Activated CD4-positive, alpha-beta T cell treated with anti-CD3 and anti-CD28 coated beads for 36 hours (primary cell): ENCODE measurements at regions of chr14 and their contacts with region 1.

Region 1: DNA sequence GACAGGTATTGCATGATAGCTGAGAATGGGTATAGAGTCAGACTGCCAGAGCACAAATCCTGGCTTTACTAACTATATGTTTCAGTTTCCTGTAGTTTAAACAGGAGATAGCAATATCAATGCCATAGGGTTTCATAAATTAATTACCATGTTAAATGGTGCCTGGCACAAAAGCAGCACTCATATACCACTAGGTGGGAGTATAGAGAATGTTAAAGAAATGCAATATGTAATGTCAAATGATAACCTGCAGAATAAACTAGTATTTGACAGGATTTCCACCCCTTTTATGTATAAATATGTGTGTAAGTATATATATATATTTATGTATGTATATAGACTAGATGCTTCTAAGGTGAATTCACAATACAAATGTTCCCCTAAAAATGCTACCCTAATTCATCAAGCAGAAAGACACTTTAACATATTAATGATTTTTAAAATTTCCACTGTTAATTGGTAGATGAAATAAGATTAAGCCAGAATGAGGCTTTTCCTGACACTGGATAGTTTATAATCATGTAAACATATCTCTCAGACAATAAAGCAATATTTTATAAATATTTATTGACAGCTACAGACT is 8.6 kb downstream of the WDR89 start:
- DNase-seq: no peak
- ATAC-seq: peak; percentile 69
- H3K4me3 Mint-ChIP-seq: no peak overlapping the region
- H3K27ac Mint-ChIP-seq: no peak overlapping the region
- H3K4me1 Mint-ChIP-seq: peaks cover 37% of the 10 kb centered on the region
- H3K27me3 Mint-ChIP-seq: no peaks in the 10 kb centered on the region

Region 2: GRCh38 chr14:63134801-63135200 is 498.2 kb before region 1 on chr14:
- CTCF ChIA-PET with region 1: no interaction called
- POLR2A ChIA-PET with region 1: no interaction called
- intact Hi-C with region 1: no loop called
- DNase-seq: no peak
- ATAC-seq: no peak
- H3K4me3 Mint-ChIP-seq: no peak overlapping the region
- H3K27ac Mint-ChIP-seq: no peak overlapping the region
- H3K4me1 Mint-ChIP-seq: no peaks in the 10 kb centered on the region
- H3K27me3 Mint-ChIP-seq: peaks cover 3% of the 10 kb centered on the region

Region 3: DNA sequence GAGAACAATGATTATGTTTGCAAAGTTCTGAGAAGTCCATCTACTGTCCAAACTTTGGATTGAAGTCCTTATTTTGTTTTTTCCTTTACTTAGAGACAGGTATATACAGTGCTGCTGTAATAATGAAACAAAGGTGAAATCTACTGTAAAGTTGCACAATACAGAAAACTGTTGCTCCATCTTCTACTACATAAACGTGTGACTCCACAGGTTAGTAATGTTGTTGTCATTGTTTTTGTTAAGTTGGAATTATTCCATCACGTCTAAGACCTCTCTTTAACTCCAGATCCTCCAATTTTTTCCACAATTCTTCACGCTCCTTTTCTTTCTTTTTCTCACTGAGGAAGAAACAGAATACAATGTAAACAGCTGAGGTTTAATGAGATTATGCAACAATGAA is 257.3 kb before region 1 on chr14:
- CTCF ChIA-PET with region 1: no interaction called
- POLR2A ChIA-PET with region 1: no interaction called
- intact Hi-C with region 1: no loop called
- DNase-seq: no peak
- ATAC-seq: no peak
- H3K4me3 Mint-ChIP-seq: no peak overlapping the region
- H3K27ac Mint-ChIP-seq: no peak overlapping the region
- H3K4me1 Mint-ChIP-seq: no peaks in the 10 kb centered on the region
- H3K27me3 Mint-ChIP-seq: no peaks in the 10 kb centered on the region

Region 4: GRCh38 chr14:63468273-63468672 is 164.8 kb before region 1 on chr14:
- CTCF ChIA-PET with region 1: no interaction called
- POLR2A ChIA-PET with region 1: no interaction called
- intact Hi-C with region 1: no loop called
- DNase-seq: no peak
- ATAC-seq: peak; percentile 64
- H3K4me3 Mint-ChIP-seq: no peak overlapping the region
- H3K27ac Mint-ChIP-seq: no peak overlapping the region
- H3K4me1 Mint-ChIP-seq: peaks cover 49% of the 10 kb centered on the region
- H3K27me3 Mint-ChIP-seq: no peaks in the 10 kb centered on the region

Region 5: DNA sequence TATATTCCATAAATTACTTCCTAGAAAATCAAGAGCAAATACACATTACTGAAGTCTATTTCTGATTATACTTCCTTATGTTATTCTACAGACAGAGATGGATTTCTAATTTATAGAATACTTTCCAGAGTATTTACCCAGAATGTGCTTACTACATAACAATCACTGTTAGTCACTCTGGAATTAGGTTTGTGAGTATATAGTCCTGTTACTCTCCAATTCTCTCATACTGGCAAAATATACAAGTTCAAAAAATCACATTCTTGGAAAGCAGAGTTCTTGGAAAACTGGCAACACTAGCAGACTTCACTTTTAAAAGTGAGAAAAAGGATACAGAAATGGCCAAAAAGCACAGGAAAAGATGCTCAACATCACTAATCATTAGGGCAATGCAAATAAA is 97.1 kb before region 1 on chr14:
- CTCF ChIA-PET with region 1: no interaction called
- POLR2A ChIA-PET with region 1: no interaction called
- intact Hi-C with region 1: no loop called
- DNase-seq: no peak
- ATAC-seq: no peak
- H3K4me3 Mint-ChIP-seq: no peak overlapping the region
- H3K27ac Mint-ChIP-seq: no peak overlapping the region
- H3K4me1 Mint-ChIP-seq: peaks cover 18% of the 10 kb centered on the region
- H3K27me3 Mint-ChIP-seq: no peaks in the 10 kb centered on the region

Region 6: DNA sequence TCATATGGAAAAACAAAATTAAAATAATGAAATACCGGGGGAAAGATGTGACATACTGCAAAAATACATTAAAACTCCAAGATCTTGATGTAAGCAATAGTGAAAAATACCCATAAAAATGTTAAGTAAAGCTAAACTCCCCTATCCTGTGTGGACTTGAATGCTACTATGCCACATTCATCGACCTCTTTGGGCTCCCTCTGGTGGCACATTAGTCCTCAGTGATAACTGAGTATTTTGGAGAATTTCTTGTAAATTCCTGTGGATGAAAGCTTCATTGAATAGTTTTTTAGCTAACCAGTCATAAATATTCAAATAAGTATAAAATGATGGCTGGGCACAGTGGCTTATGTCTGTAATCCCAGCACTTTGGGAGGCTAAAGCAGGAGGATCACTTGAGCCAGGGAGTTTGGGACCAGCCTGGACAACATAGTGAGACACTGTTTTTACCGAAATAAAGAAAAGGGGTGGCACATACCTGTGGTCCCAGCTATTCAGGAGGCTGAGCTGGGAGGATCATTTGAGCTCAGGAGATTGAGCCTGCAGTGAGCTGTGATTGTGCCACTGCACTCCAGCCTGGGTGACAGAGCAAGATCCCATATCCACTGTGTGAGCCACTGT is 137.3 kb after region 1 on chr14:
- CTCF ChIA-PET with region 1: interaction called, 24 read pairs
- POLR2A ChIA-PET with region 1: no interaction called
- intact Hi-C with region 1: loop called (anchors 1 kb)
- DNase-seq: peak; percentile 64
- ATAC-seq: peak; percentile 78
- H3K4me3 Mint-ChIP-seq: no peak overlapping the region
- H3K27ac Mint-ChIP-seq: no peak overlapping the region
- H3K4me1 Mint-ChIP-seq: peaks cover 2% of the 10 kb centered on the region
- H3K27me3 Mint-ChIP-seq: no peaks in the 10 kb centered on the region